ENCODE measurements at regions of chr6 and their contacts with region 1.

Region 1: DNA sequence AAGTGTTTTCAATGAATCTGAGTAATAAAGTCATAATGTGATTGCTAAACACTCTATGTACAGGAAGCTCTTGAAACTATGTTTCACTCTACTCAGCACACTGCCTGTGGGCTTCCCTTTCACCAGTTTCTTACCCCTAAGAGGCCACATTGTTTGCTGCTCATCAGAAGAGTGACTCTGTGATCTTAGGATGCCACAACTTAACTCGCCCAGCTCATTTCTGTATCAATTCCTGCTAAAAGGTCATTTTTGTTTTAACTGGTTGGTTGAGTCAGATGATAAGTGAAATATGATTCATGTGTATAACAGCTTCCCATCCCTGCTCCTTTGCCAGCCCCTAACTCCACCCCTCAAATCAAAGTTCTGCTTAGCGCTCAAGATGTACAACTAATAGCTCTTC is 9.8 kb upstream of the NDUFAF4 start:
- DNase-seq: peak; percentile 76
- ATAC-seq: peak; percentile 99
- H3K4me3 Mint-ChIP-seq: no peak overlapping the region
- H3K27ac Mint-ChIP-seq: peak overlapping the region; percentile 69
- H3K4me1 Mint-ChIP-seq: peaks cover 26% of the 10 kb centered on the region
- H3K27me3 Mint-ChIP-seq: peaks cover 37% of the 10 kb centered on the region

Region 2: DNA sequence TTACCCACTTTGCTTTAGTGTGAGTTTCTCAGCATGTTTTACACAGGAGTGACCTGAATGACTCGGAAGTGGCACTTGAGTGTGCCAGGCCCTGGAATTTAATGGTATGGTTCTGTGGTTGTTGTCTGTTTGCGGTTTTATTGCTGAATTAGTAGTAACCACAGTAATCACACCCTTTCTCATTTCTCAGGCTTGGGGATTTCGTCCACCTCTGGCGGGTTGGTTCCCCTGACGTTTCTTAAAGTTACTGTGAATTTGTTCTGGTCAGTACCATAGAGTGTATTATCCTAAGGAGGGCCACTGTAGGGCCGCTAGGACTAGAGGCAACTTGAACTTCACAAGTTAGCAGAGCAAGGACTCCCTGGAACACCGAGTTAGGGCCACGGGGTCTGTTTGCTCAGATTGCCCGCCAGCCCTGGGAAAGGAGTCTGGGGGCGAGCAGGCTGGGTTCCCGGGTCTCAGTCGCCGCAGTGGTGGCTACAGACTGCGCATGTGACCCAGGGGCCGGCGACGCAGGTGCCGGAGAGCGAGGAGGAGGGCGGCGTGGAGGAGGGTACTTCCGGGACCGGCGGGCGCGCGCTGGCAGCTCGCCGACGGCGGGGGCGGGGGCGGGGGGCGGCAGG is 16.5 kb after region 1 on chr6:
- CTCF ChIA-PET with region 1: interaction called, 22 read pairs
- POLR2A ChIA-PET with region 1: interaction called, 11 read pairs
- intact Hi-C with region 1: loop called (anchors 1 kb)
- DNase-seq: no peak
- ATAC-seq: peak; percentile 62
- H3K4me3 Mint-ChIP-seq: peak overlapping the region; percentile 88
- H3K27ac Mint-ChIP-seq: peak overlapping the region; percentile 81
- H3K4me1 Mint-ChIP-seq: peaks cover 28% of the 10 kb centered on the region
- H3K27me3 Mint-ChIP-seq: no peaks in the 10 kb centered on the region

Region 3: DNA sequence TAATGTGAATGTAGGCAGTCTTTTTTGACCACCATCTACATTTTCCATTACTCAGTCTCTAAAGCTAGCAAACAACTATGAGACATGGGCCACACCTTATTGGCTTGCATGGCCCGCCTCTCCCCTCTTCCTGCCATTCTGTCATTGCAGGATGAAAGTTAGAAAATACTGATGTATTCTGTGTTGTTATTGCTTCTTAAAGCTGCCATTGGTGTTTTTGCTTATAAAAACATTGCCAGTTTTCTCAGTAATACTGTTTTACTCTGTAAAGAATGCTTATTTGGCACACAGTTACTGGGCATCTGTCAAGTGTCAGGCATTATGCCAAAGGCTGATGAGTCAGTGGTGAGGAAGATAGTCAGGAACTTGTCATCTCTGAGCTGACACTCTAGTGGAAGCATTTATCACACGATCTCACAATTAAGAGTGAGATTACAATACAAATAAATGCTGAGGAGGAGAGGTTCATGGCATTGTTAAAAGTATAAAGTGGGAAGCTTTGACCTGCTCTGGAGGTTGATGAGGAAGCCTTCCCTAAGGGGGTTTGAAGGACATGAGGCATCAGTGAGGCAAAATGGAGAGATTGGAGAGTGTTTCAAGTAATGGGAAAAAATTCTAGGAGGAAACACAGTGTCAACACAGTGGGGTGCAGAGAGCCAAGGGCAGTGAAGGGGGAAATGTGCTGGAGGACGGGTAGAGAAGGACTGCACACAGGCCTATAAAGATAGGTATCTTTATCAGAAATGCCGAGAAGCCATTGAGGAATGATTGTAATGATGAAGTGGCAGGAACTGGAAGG is 31.7 kb after region 1 on chr6:
- CTCF ChIA-PET with region 1: no interaction called
- POLR2A ChIA-PET with region 1: interaction called, 4 read pairs
- intact Hi-C with region 1: loop called in 1 of 2 experiments (anchors 1 kb)
- DNase-seq: peak; percentile 65
- ATAC-seq: peak; percentile 93
- H3K4me3 Mint-ChIP-seq: no peak overlapping the region
- H3K27ac Mint-ChIP-seq: no peak overlapping the region
- H3K4me1 Mint-ChIP-seq: peaks cover 12% of the 10 kb centered on the region
- H3K27me3 Mint-ChIP-seq: no peaks in the 10 kb centered on the region

Region 4: GRCh38 chr6:96947055-96947454 is 39.6 kb after region 1 on chr6:
- CTCF ChIA-PET with region 1: interaction called, 3 read pairs
- POLR2A ChIA-PET with region 1: no interaction called
- intact Hi-C with region 1: loop called in 1 of 2 experiments (anchors 2 kb)
- DNase-seq: peak; percentile 12
- ATAC-seq: peak; percentile 95
- H3K4me3 Mint-ChIP-seq: no peak overlapping the region
- H3K27ac Mint-ChIP-seq: no peak overlapping the region
- H3K4me1 Mint-ChIP-seq: peaks cover 10% of the 10 kb centered on the region
- H3K27me3 Mint-ChIP-seq: no peaks in the 10 kb centered on the region

Region 5: DNA sequence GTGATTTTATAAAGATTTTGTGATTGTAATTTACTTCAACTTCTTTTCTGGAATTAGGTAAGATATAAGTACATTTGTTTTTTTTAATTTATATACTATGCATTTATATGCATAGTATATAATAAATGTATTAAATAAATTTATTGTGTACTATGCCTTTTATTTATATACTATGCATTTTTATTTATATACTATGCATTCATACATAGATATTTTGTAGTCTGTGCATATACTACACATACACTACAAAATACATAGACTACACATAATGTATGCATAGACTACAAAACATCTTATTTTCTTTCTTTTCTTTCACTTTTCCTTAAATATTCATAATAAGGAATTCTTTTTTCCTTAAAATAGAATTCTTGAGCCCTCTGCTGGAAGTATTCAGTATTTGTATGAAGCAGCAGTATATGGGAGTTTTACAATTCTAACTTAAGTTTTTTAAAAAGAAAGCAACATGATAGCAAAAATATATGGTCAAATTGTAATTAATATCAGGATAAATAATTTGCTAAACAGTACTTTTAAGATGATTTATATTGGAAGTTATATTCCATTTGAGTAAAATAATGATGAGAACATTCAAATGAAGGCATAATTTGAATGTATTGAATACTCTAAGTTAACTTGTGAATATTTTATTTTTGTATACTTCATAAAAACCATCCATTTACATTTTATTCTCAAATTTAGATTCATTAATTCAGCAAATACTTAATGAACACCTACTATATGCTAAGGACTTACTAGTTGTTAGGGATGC is 146.3 kb after region 1 on chr6:
- CTCF ChIA-PET with region 1: interaction called, 3 read pairs
- POLR2A ChIA-PET with region 1: interaction called, 8 read pairs
- intact Hi-C with region 1: loop called in 1 of 2 experiments (anchors 2 kb)
- DNase-seq: no peak
- ATAC-seq: no peak
- H3K4me3 Mint-ChIP-seq: no peak overlapping the region
- H3K27ac Mint-ChIP-seq: no peak overlapping the region
- H3K4me1 Mint-ChIP-seq: peaks cover 15% of the 10 kb centered on the region
- H3K27me3 Mint-ChIP-seq: no peaks in the 10 kb centered on the region

Region 6: GRCh38 chr6:97110626-97111025 is 203.1 kb after region 1 on chr6:
- CTCF ChIA-PET with region 1: no interaction called
- POLR2A ChIA-PET with region 1: no interaction called
- intact Hi-C with region 1: loop called in 1 of 2 experiments (anchors 5 kb)
- DNase-seq: no peak
- ATAC-seq: no peak
- H3K4me3 Mint-ChIP-seq: no peak overlapping the region
- H3K27ac Mint-ChIP-seq: no peak overlapping the region
- H3K4me1 Mint-ChIP-seq: peaks cover 27% of the 10 kb centered on the region
- H3K27me3 Mint-ChIP-seq: no peaks in the 10 kb centered on the region

Measured in activated CD4-positive, alpha-beta T cell treated with anti-CD3 and anti-CD28 coated beads for 36 hours (primary cell).